ENCODE measurements at regions of chr1 and their contacts with region 1.

Region 1: DNA sequence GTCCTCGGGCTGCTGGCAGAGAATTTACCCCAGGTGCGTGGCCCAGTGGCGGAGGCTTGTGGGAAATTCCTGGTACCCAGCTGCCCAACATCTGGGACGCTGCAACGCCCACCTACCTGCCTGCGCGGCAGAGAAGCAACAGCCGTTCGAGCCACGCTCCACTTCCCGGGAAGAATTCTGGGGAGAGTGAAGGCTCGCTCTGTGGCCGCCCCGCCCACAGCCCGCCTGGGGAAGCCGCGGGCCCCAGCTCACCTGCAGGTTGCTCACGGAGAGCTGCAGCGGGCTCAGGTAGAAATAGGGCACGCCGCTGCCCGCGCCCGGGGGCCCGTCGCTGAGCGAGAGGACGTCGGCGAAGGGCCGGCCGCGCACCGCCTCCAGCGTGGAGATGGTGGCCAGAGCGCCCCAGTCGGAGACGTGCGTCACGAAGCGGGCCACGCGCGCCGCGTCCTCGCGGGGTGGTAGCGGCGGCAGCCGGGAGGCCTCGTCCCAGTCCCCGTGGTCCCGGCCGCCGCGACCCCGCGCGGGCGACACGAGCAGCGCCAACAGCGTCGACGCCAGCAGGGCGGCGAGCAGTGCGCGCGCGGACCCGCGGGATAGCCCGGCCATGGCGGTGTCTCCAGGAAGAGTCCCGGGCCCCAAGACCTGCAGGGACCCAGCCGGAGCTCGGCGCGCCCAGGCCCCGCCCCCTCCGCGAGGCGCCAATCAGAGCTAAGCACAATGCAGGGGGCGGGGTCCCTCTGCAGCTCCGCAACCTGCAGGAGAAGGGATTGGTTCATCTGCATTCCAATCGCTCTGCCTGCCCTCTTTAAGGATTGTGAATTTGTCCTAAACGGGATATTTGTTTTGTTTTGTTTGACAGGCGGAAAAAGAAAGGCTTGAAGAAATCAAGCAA is at the start of gene CREG1:
- DNase-seq: peak; percentile 78 to 93
- H3K4me3 ChIP-seq: peak within 1 kb of the TSS; percentile 65 to 84 (median 70)
- H3K27ac ChIP-seq: 0 out of 2 replicates have a peak within 1 kb of the TSS, but pooled peaks have one; percentile 12
- H3K4me1 ChIP-seq: no peaks in the 10 kb centered on the region; a peak in 1 of 7 replicates
- H3K27me3 ChIP-seq: no peaks in the 10 kb centered on the region; a peak in 1 of 7 replicates
- CTCF ChIP-seq: no peak
- EP300 ChIP-seq: no peak
- POLR2A ChIP-seq: peak; percentile 84 to 94
- RAD21 ChIP-seq: no peak
- total RNA-seq, gene CREG1: 28.7 and 30.1 TPM in 2 replicates

Region 2: DNA sequence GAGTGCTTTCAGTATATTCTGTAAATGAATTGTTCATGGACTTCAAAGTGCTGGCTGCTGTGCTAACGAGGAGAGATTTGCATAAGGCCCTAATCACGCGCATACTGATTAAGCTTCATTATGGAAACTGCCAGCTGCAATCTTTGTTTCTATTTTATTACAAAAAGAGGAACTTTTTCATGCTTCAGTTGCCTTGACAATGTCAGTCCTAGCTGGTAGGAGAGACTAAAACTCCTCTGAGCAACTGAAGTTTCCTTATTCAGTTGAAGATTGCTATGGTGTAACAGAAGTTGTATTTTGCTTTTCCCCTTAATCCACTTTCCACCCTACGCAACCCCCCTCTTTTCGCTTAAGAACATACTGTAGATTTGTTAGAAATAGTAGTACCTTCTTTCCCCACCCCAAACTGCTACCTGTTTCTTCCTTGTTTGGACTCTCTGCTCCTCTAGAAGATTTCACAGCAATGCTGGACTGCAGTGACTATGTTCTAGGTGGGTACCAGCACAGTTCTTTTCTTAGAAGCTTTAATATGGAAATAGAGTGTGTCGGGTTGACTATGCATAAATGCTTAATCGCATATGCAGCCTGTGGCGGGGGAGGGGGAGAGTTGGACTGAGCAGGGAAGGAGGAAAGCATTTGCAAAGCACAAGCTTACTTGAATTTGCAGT is 224.4 kb before region 1 on chr1:
- CTCF ChIA-PET with region 1: no interaction called
- POLR2A ChIA-PET with region 1: no interaction called
- DNase-seq: no peak
- H3K4me3 ChIP-seq: peak overlapping the region; percentile 1 to 46 (median 29); a peak in 4 of 8 replicates
- H3K27ac ChIP-seq: no peak overlapping the region
- H3K4me1 ChIP-seq: peaks cover 0 to 10% (median 2%) of the 10 kb centered on the region in 4 experiments; a peak in 3 of 7 replicates
- H3K27me3 ChIP-seq: no peaks in the 10 kb centered on the region
- CTCF ChIP-seq: no peak
- EP300 ChIP-seq: no peak
- POLR2A ChIP-seq: no peak
- RAD21 ChIP-seq: no peak

Region 3: DNA sequence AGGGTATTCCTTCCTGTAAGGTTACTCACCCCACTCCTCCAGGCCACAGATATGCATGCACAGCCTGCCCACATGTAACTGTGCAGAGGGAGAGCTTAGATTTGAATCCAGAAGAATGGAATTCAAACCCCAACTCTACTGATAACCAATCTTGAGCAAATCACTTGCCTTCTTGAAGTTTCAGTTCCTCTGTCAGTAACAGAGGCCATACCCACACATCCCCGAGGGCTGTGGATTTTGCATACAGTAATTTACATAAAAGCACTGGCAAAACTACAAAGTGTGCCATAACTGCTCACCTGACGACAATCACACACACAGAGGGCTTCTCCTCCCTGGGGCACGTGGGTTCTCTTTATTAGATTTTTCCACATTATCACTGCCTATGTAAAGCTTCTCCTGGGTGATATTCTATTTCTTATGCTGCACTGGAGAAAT is 53.7 kb before region 1 on chr1:
- CTCF ChIA-PET with region 1: no interaction called
- POLR2A ChIA-PET with region 1: no interaction called
- DNase-seq: no peak
- H3K4me3 ChIP-seq: no peak overlapping the region
- H3K27ac ChIP-seq: no peak overlapping the region
- H3K4me1 ChIP-seq: peaks cover 4 to 12% (median 9%) of the 10 kb centered on the region in 4 experiments; a peak in 5 of 7 replicates
- H3K27me3 ChIP-seq: peaks cover 0 to 2% (median 0%) of the 10 kb centered on the region in 4 experiments; a peak in 1 of 7 replicates
- CTCF ChIP-seq: no peak
- EP300 ChIP-seq: no peak
- POLR2A ChIP-seq: no peak
- RAD21 ChIP-seq: no peak

Region 4: GRCh38 chr1:167563579-167564246 is 10.3 kb after region 1 on chr1:
- CTCF ChIA-PET with region 1: interaction called, 38 read pairs
- POLR2A ChIA-PET with region 1: interaction called, 32 read pairs
- DNase-seq: no peak
- H3K4me3 ChIP-seq: no peak overlapping the region
- H3K27ac ChIP-seq: no peak overlapping the region
- H3K4me1 ChIP-seq: no peaks in the 10 kb centered on the region
- H3K27me3 ChIP-seq: no peaks in the 10 kb centered on the region
- CTCF ChIP-seq: no peak
- EP300 ChIP-seq: no peak
- POLR2A ChIP-seq: no peak
- RAD21 ChIP-seq: no peak

Region 5: GRCh38 chr1:167582064-167582463 is 28.7 kb after region 1 on chr1:
- CTCF ChIA-PET with region 1: no interaction called
- POLR2A ChIA-PET with region 1: no interaction called
- DNase-seq: no peak
- H3K4me3 ChIP-seq: no peak overlapping the region
- H3K27ac ChIP-seq: no peak overlapping the region
- H3K4me1 ChIP-seq: no peaks in the 10 kb centered on the region
- H3K27me3 ChIP-seq: no peaks in the 10 kb centered on the region
- CTCF ChIP-seq: no peak
- EP300 ChIP-seq: no peak
- POLR2A ChIP-seq: no peak
- RAD21 ChIP-seq: no peak

Region 6: DNA sequence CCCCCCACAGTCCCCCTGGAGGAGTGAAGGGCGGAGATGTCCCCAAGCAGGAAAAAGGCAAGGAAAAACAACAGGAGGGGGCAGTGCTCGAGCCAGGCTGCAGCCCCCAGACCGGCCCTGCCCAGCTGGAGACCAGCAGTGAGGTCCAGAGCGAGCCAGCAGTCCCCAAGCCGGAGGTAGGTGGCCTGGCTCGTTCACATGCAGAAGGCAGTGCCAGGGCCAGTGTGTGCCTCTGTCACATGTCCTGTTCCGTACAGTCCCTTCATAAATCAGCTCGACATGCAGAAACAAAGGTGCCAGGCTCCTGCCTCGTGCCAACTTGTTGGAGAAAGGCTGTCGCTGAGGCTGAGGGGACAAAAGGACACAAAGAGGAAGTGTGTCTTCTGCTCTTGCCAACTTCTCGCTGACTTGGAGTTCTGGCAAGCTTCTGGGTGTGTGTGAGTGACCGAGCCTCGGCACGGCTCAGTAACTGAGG is 144.3 kb after region 1 on chr1:
- CTCF ChIA-PET with region 1: interaction called, 22 read pairs
- POLR2A ChIA-PET with region 1: interaction called, 4 read pairs
- DNase-seq: no peak
- H3K4me3 ChIP-seq: no peak overlapping the region
- H3K27ac ChIP-seq: no peak overlapping the region
- H3K4me1 ChIP-seq: no peaks in the 10 kb centered on the region; a peak in 1 of 7 replicates
- H3K27me3 ChIP-seq: no peaks in the 10 kb centered on the region; a peak in 1 of 7 replicates
- CTCF ChIP-seq: no peak
- EP300 ChIP-seq: no peak
- POLR2A ChIP-seq: no peak
- RAD21 ChIP-seq: no peak

Region 7: GRCh38 chr1:167913863-167914502 is 360.6 kb after region 1 on chr1 and contains the start of gene ADCY10:
- CTCF ChIA-PET with region 1: no interaction called
- POLR2A ChIA-PET with region 1: no interaction called
- DNase-seq: no peak
- H3K4me3 ChIP-seq: no peak within 1 kb of the TSS
- H3K27ac ChIP-seq: no peak within 1 kb of the TSS
- H3K4me1 ChIP-seq: no peaks in the 10 kb centered on the region
- H3K27me3 ChIP-seq: no peaks in the 10 kb centered on the region
- CTCF ChIP-seq: no peak
- EP300 ChIP-seq: no peak
- POLR2A ChIP-seq: no peak
- RAD21 ChIP-seq: no peak
- total RNA-seq, gene ADCY10: not detected in 2 replicates